ENCODE measurements at regions of chr4 and their contacts with region 1.

Region 1: GRCh38 chr4:140807491-140808252 is 51.5 kb upstream of the TBC1D9 start:
- DNase-seq: peak; percentile 91
- H3K4me3 ChIP-seq: peak overlapping the region; percentile 53
- H3K27ac ChIP-seq: peak overlapping the region; percentile 98
- H3K4me1 ChIP-seq: peaks cover 91% of the 10 kb centered on the region
- CTCF ChIP-seq: 0 out of 2 replicates have a peak, but pooled peaks have one; percentile 30

Region 2: DNA sequence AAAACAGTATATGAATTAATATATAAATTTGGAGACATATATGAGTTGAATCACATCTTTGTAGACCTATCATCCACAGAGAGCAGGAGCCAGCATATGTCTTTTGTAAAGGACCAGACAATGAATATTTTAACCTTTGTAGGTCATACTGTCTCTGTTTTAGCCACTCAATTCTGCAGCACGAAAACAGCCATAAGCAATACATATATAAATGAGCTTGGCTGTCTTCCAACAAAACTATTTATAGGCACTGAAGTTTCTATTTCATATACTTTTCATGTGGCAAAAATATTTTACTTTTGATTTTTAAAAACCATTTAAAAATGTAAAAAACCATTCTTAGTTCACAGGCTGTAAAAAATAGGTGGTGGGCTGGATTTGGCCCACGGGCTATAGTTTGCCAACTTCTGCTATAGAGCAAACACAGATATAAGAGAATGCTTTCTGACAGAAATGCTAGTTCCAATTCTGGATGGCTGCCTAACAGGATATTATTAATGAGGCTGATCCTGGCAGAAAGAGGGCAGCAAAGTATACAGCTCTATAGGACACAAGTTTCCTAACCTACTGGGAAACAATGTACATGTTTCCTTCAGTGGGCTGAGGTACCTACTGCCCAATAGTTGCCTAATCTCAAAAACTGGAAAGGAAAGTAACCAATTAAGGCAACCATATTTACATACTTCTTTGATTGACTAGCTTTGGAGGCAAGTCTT is 180.9 kb before region 1 on chr4:
- CTCF ChIA-PET with region 1: no interaction called
- POLR2A ChIA-PET with region 1: interaction called, 3 read pairs
- intact Hi-C with region 1: loop called (anchors 5 kb)
- DNase-seq: no peak
- H3K4me3 ChIP-seq: no peak overlapping the region
- H3K27ac ChIP-seq: no peak overlapping the region
- H3K4me1 ChIP-seq: peaks cover 41% of the 10 kb centered on the region
- CTCF ChIP-seq: peak; percentile 39; the same call in 1 of the 2 replicates

Region 3: DNA sequence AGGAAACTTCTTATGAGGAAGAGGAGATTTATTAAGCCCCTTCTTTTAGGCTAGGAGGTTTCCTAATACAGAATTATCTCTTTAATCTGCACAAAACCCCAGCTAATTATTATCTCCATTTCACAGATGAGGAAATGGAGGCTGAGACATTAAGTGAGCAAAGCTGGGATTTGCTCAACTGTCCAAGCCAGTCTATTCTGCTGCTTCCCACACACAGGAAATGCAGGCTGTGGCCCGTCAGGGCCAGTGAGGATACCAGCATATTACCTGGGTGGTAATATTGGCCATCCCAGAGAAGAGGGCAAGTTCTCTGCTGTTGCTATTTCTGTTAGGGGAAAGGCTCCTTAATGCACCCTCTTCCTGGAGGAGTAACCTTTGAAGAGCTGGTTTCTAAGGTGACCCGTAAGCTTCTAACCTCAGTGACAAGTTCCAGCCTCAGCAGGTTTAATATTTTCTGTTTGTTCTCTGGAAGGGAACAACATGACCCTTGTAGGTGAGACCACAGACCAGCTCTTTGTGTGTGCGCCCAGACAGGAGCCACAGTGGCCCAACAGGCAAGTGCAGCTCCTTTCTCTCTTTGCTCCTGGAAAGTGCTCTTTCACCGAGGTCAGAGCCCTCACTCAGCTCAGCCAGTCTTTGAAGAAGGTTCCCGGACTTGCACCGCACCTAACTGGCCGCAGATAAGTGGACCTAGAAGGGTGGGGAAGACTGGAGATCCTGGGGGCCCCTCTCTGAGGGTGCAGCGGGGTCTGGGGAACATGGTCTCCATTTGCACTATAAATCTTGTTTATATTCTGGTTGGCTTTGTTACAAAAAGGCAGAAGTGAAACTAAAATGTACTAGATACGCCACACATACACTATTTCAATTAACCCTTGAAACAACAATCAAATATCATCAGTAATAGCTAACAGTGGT is 87.0 kb before region 1 on chr4:
- CTCF ChIA-PET with region 1: no interaction called
- POLR2A ChIA-PET with region 1: interaction called, 27 read pairs
- intact Hi-C with region 1: loop called (anchors 1 kb)
- DNase-seq: peak; percentile 76
- H3K4me3 ChIP-seq: peak overlapping the region; percentile 65
- H3K27ac ChIP-seq: peak overlapping the region; percentile 70
- H3K4me1 ChIP-seq: peaks cover 57% of the 10 kb centered on the region
- CTCF ChIP-seq: no peak

Region 4: GRCh38 chr4:140756319-140757231 is 51.1 kb before region 1 on chr4 and contains the start of gene TBC1D9:
- CTCF ChIA-PET with region 1: no interaction called
- POLR2A ChIA-PET with region 1: interaction called, 5 read pairs
- intact Hi-C with region 1: loop called (anchors 5 kb)
- DNase-seq: peak; percentile 75
- H3K4me3 ChIP-seq: peak within 1 kb of the TSS; percentile 73
- H3K27ac ChIP-seq: no peak within 1 kb of the TSS
- H3K4me1 ChIP-seq: peaks cover 30% of the 10 kb centered on the region
- CTCF ChIP-seq: peak; percentile 33
- total RNA-seq, gene TBC1D9: 1.0 and 1.6 TPM in 2 replicates

Region 5: DNA sequence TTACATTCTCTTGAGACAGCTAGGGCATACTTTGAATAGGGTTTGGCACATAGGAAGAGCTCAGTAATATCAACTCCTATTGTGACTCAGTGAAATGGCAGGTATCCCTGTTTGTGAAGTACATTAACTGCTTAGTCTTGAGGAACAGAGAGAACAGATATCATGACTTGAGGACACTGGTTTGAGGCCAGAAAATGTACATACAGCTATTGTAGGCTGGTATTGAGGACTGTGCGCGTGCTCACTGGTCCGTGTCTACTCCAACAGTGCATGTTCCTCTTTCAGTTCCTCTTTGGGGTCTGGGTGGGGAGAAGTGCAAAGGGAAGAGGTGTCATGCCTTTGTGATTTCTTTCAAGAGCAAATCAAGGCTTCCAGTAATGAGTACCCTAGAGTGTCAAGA is 16.9 kb before region 1 on chr4:
- CTCF ChIA-PET with region 1: interaction called, 6 read pairs
- POLR2A ChIA-PET with region 1: interaction called, 17 read pairs
- intact Hi-C with region 1: loop called (anchors 1 kb)
- DNase-seq: peak; percentile 94
- H3K4me3 ChIP-seq: peak overlapping the region; percentile 12
- H3K27ac ChIP-seq: peak overlapping the region; percentile 47
- H3K4me1 ChIP-seq: peaks cover 46% of the 10 kb centered on the region
- CTCF ChIP-seq: no peak

Region 6: GRCh38 chr4:140829825-140830224 is 22.2 kb after region 1 on chr4:
- CTCF ChIA-PET with region 1: interaction called, 4 read pairs
- POLR2A ChIA-PET with region 1: interaction called, 76 read pairs
- intact Hi-C with region 1: loop called (anchors 2 kb)
- DNase-seq: peak; percentile 86
- H3K4me3 ChIP-seq: peak overlapping the region; percentile 42
- H3K27ac ChIP-seq: peak overlapping the region; percentile 88
- H3K4me1 ChIP-seq: peaks cover 68% of the 10 kb centered on the region
- CTCF ChIP-seq: no peak

Region 7: GRCh38 chr4:140851032-140851636 is 43.5 kb after region 1 on chr4:
- CTCF ChIA-PET with region 1: no interaction called
- POLR2A ChIA-PET with region 1: interaction called, 6 read pairs
- intact Hi-C with region 1: loop called (anchors 1 kb)
- DNase-seq: peak; percentile 86
- H3K4me3 ChIP-seq: no peak overlapping the region
- H3K27ac ChIP-seq: no peak overlapping the region
- H3K4me1 ChIP-seq: peaks cover 27% of the 10 kb centered on the region
- CTCF ChIP-seq: peak; percentile 100